Activated CD4-positive, alpha-beta memory T cell treated with anti-CD3 and anti-CD28 coated beads, Interleukin-2, amount 10 ng/mL, durations not matched to agents 7 days and 5 days (primary cell): ENCODE measurements at regions of chr12 and their contacts with region 1.

Region 1: GRCh38 chr12:54398995-54399793 is 14.7 kb upstream of the ZNF385A start:
- DNase-seq: peak; percentile 89
- H3K4me3 Mint-ChIP-seq: no peak overlapping the region
- H3K27ac Mint-ChIP-seq: no peak overlapping the region
- H3K4me1 Mint-ChIP-seq: peaks cover 27% of the 10 kb centered on the region
- H3K27me3 Mint-ChIP-seq: no peaks in the 10 kb centered on the region

Region 2: GRCh38 chr12:53791735-53792326 is 607.4 kb before region 1 on chr12:
- CTCF ChIA-PET with region 1: no interaction called
- POLR2A ChIA-PET with region 1: no interaction called
- DNase-seq: peak; percentile 17
- H3K4me3 Mint-ChIP-seq: no peak overlapping the region
- H3K27ac Mint-ChIP-seq: no peak overlapping the region
- H3K4me1 Mint-ChIP-seq: no peaks in the 10 kb centered on the region
- H3K27me3 Mint-ChIP-seq: peaks cover 24% of the 10 kb centered on the region

Region 3: DNA sequence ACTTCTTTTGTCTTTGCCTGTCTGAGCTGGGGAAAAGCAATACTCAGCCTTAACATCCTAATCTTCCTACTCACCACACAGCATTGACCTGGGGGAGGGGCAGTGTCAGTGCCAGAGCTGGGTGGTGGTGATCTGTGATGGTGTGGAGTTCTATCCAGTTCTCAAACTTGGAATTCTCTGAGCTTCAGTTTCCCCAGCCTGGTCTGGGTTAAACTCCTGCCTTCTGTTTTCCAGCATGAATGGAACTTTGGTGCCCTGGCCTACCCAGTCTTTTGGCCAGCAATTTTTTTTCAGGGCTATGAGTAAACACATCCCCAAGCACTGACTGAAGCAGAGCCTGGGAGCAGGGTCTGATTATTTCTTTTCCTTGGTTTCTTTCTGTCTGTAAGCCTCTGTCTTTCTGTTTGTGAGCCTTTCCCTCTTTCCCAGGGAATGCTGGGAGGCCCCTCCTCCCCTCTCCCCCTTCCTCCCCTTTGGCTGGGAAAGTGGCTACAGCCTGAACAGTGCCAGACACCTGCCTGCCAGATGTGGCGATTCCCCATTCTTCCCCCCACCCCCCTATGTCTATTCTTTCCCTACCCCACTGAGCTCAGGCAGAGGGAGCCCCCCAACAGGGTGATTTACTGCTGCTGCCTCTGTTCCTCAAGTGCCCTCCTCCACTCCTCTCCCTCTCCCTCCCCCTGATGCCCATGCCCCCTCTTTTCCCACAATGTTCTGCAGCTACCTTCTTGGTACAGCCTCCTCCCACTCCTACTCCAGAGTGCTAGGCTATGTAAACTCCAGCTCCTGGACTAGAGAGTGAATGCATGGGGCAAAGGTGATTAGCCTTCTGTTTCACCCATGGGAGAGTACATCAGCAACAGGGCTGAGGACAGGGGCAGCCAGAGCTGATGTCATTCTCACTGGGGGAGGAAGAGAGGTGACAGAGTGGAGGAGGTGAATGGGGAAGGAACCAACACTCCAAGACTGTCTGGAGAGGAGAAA is 46.0 kb before region 1 on chr12:
- CTCF ChIA-PET with region 1: no interaction called
- POLR2A ChIA-PET with region 1: no interaction called
- DNase-seq: no peak
- H3K4me3 Mint-ChIP-seq: no peak overlapping the region
- H3K27ac Mint-ChIP-seq: no peak overlapping the region
- H3K4me1 Mint-ChIP-seq: peaks cover 13% of the 10 kb centered on the region
- H3K27me3 Mint-ChIP-seq: no peaks in the 10 kb centered on the region

Region 4: GRCh38 chr12:54411391-54412241 is 12.4 kb after region 1 on chr12:
- CTCF ChIA-PET with region 1: interaction called, 282 read pairs
- POLR2A ChIA-PET with region 1: interaction called, 52 read pairs
- DNase-seq: peak; percentile 75
- H3K4me3 Mint-ChIP-seq: peak overlapping the region; percentile 72
- H3K27ac Mint-ChIP-seq: peak overlapping the region; percentile 91
- H3K4me1 Mint-ChIP-seq: peaks cover 68% of the 10 kb centered on the region
- H3K27me3 Mint-ChIP-seq: no peaks in the 10 kb centered on the region

Region 5: GRCh38 chr12:54431911-54432814 is 33.0 kb after region 1 on chr12:
- CTCF ChIA-PET with region 1: interaction called, 481 read pairs
- POLR2A ChIA-PET with region 1: interaction called, 46 read pairs
- DNase-seq: peak; percentile 52
- H3K4me3 Mint-ChIP-seq: peak overlapping the region; percentile 63
- H3K27ac Mint-ChIP-seq: peak overlapping the region; percentile 76
- H3K4me1 Mint-ChIP-seq: peaks cover 46% of the 10 kb centered on the region
- H3K27me3 Mint-ChIP-seq: peaks cover 25% of the 10 kb centered on the region

Region 6: DNA sequence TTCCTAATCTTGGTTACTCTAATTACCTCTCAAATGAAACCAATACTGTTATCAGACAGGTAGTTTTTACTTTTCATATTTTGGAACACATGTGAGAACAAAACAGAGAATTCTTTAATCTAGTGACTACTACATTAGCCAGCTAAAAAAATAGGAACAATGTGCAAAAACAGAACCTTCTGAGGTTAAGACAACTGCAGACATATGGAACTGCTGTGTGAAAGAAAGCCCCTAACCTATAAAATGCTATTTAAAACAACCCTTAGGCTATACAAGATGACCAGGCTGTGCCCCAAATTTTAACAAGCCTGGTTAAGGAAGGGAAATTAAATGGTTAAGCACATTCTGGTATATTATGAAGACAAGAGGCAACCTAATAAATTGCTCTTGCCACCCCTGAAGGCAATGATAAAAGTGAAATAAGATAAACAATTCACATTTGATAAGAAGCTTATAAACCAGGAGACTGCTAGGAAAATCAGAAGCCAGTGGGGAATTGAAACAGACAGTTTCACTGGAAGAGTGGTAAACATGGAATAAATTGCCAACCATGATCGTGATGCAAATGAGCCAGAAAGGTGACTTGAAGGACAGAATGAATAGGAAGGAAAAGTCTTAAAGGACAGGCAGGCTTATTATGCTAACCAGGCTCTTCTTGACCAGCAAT is 66.8 kb after region 1 on chr12:
- CTCF ChIA-PET with region 1: interaction called, 10 read pairs
- POLR2A ChIA-PET with region 1: no interaction called
- DNase-seq: no peak
- H3K4me3 Mint-ChIP-seq: no peak overlapping the region
- H3K27ac Mint-ChIP-seq: no peak overlapping the region
- H3K4me1 Mint-ChIP-seq: no peaks in the 10 kb centered on the region
- H3K27me3 Mint-ChIP-seq: peaks cover 27% of the 10 kb centered on the region